IMR-90 (cell line): ENCODE measurements at regions of chr12 and their contacts with region 1.

Region 1: DNA sequence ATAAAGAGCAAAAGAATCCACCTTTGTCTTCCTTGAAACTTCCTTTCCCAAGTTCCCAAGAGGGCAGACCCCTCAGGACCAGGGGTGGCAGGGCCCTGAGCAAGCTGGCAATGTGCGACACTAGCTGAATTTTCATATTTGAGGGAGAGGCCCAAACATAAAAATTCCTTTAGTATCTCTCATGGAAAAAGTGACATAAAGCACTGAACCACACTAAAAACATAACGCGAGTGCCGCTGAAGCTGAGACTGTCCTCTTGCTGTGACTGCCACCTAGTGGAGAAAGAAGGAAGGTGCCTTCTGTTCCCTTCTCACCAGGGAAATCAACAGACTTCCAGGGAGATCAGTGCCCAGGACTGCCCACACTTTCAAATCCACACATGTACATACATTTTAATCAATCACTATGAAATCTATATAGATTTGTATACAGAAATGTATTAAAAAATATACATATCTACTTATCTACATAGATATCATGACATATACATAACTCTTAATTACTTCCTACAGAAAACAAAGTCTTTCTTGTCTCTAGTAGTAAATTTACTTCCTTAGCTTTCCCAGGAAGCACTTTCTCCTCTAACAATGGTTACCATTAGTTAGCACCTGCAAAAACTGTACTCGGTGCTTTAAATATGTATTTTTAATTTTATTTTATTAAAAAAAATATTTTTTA is 53.8 kb downstream of the SSH1 start:
- DNase-seq: peak; percentile 94
- ATAC-seq: peak; percentile 47
- H3K4me3 ChIP-seq: no peak overlapping the region
- H3K27ac ChIP-seq: peak overlapping the region; percentile 97
- H3K4me1 ChIP-seq: peaks cover 45% of the 10 kb centered on the region
- H3K27me3 ChIP-seq: no peaks in the 10 kb centered on the region
- CTCF ChIP-seq: peak; percentile 96
- POLR2A ChIP-seq: peak; percentile 63
- RAD21 ChIP-seq: peak; percentile 93

Region 2: DNA sequence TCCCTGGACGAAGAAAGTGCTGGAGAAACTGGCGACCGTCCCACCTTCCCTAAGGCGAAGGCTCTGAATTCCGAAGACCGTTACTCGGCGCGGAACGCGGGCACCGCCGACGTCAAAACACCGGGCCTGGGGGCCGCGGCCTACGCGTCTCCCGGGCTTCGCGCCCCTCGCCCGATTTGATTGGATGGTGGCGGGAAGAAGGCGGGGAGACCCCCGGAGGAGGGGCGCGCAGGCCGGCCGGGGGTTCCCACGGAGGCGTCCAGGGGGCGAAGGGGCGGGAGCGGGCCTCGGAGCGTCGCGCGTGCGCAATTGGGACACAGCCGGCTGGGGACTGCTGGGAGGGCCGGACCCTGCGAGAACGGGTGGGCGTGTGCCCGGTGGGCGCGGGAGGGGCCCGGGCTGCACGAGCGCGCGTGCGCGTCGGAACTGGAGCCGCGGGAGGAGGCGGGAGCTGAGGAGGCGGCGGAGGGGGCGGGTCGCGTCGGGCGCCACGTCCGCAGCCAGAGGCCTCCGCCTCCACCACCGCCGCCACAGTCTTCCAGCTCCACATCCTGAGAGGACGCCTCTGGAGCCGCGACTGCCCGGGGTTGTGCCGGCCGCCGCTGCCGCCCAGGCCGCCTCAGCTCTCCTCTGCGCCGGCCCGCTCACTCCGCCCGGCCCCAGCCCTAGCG is 1848.1 kb before region 1 on chr12 and contains the start of gene TMEM263:
- CTCF ChIA-PET with region 1: no interaction called
- POLR2A ChIA-PET with region 1: interaction called, 20 read pairs
- dilution Hi-C with region 1: no loop called
- in situ Hi-C with region 1: no loop called
- intact Hi-C with region 1: no loop called
- DNase-seq: peak; percentile 95
- ATAC-seq: peak; percentile 86
- H3K4me3 ChIP-seq: peak within 1 kb of the TSS; percentile 85
- H3K27ac ChIP-seq: peak within 1 kb of the TSS; percentile 90
- H3K4me1 ChIP-seq: peaks cover 4% of the 10 kb centered on the region
- H3K27me3 ChIP-seq: no peaks in the 10 kb centered on the region
- CTCF ChIP-seq: no peak
- POLR2A ChIP-seq: peak; percentile 97
- RAD21 ChIP-seq: no peak
- total RNA-seq, gene TMEM263: 99.7 and 154 TPM in 2 replicates

Region 3: GRCh38 chr12:108442067-108442466 is 361.5 kb before region 1 on chr12:
- CTCF ChIA-PET with region 1: no interaction called
- POLR2A ChIA-PET with region 1: no interaction called
- dilution Hi-C with region 1: no loop called
- in situ Hi-C with region 1: no loop called
- intact Hi-C with region 1: no loop called
- DNase-seq: no peak
- ATAC-seq: no peak
- H3K4me3 ChIP-seq: no peak overlapping the region
- H3K27ac ChIP-seq: no peak overlapping the region
- H3K4me1 ChIP-seq: no peaks in the 10 kb centered on the region
- H3K27me3 ChIP-seq: no peaks in the 10 kb centered on the region
- CTCF ChIP-seq: no peak
- POLR2A ChIP-seq: no peak
- RAD21 ChIP-seq: no peak

Region 4: GRCh38 chr12:108649669-108650068 is 153.9 kb before region 1 on chr12:
- CTCF ChIA-PET with region 1: no interaction called
- POLR2A ChIA-PET with region 1: no interaction called
- dilution Hi-C with region 1: no loop called
- in situ Hi-C with region 1: no loop called
- intact Hi-C with region 1: loop called (anchors 5 kb)
- DNase-seq: peak; percentile 94
- ATAC-seq: peak; percentile 73
- H3K4me3 ChIP-seq: no peak overlapping the region
- H3K27ac ChIP-seq: peak overlapping the region; percentile 28; the same call in 1 of the 2 replicates
- H3K4me1 ChIP-seq: peaks cover 31% of the 10 kb centered on the region
- H3K27me3 ChIP-seq: no peaks in the 10 kb centered on the region
- CTCF ChIP-seq: no peak
- POLR2A ChIP-seq: no peak
- RAD21 ChIP-seq: no peak

Region 5: GRCh38 chr12:108691175-108691997 is 112.2 kb before region 1 on chr12:
- CTCF ChIA-PET with region 1: no interaction called
- POLR2A ChIA-PET with region 1: no interaction called
- dilution Hi-C with region 1: no loop called
- in situ Hi-C with region 1: no loop called
- intact Hi-C with region 1: loop called (anchors 1 kb)
- DNase-seq: peak; percentile 99
- ATAC-seq: peak; percentile 84
- H3K4me3 ChIP-seq: peak overlapping the region; percentile 18
- H3K27ac ChIP-seq: peak overlapping the region; percentile 95
- H3K4me1 ChIP-seq: peaks cover 35% of the 10 kb centered on the region
- H3K27me3 ChIP-seq: no peaks in the 10 kb centered on the region
- CTCF ChIP-seq: peak; percentile 32; the same call in 1 of the 2 replicates
- POLR2A ChIP-seq: peak; percentile 82; the same call in 1 of the 2 replicates
- RAD21 ChIP-seq: peak; percentile 48

Region 6: DNA sequence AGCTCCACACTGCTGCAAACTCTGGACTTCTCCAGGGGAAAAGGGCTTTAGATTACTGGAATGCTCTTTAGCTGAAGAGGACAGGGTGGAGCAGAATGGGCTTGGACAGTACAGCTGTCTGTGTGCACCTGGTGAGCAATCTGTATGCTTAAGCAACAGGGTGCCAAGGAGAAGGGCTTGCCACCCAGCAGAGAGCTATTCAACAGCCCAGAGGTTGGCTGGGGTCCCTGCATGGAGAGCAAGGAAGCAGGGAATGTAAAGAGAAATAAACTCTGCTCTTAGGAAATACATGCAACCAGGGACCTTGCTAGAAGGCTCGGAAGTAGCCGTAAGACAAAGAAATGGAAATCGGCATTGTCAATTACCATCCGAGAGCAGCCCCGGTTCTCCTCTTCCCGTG is 19.3 kb before region 1 on chr12:
- CTCF ChIA-PET with region 1: no interaction called
- POLR2A ChIA-PET with region 1: no interaction called
- dilution Hi-C with region 1: no loop called
- in situ Hi-C with region 1: no loop called
- intact Hi-C with region 1: no loop called
- DNase-seq: no peak
- ATAC-seq: no peak
- H3K4me3 ChIP-seq: no peak overlapping the region
- H3K27ac ChIP-seq: no peak overlapping the region
- H3K4me1 ChIP-seq: peaks cover 10% of the 10 kb centered on the region
- H3K27me3 ChIP-seq: no peaks in the 10 kb centered on the region
- CTCF ChIP-seq: no peak
- POLR2A ChIP-seq: no peak
- RAD21 ChIP-seq: no peak

Region 7: DNA sequence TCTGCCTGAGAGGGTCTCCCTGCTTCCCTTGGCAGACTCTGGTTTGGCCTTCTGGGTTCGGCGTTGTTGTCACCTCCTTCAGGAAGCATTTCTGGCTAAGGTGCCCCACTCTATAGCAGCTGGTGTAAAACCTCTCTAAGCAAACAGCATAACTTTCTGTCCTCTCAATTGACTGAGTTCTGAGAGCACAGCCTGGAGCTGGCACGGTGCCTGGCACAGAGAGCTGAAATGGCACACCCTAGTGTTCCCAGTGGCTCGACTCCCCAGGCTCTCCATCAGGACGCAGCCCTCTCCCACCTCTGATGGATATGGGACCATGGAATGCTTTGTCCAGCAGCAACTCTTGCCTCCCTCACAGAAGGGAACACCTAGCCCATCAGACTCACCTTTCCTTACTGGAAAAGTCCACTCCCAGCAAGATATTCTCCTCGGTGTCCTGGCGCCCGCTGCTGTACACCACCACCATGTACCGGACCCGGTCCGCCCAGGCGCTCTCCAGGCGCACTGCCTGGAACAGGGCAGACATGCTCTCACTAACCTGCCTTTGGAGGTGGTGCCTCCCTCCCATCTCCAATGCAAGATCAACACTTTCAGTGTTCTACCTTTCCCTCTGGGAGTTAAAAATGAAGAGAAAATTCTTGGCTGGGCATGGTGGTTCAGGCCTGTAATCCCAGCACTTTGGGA is 13.2 kb after region 1 on chr12:
- CTCF ChIA-PET with region 1: interaction called, 11 read pairs
- POLR2A ChIA-PET with region 1: interaction called, 13 read pairs
- dilution Hi-C with region 1: no loop called
- in situ Hi-C with region 1: no loop called
- intact Hi-C with region 1: no loop called
- DNase-seq: no peak
- ATAC-seq: no peak
- H3K4me3 ChIP-seq: no peak overlapping the region
- H3K27ac ChIP-seq: peak overlapping the region; percentile 37
- H3K4me1 ChIP-seq: peaks cover 15% of the 10 kb centered on the region
- H3K27me3 ChIP-seq: no peaks in the 10 kb centered on the region
- CTCF ChIP-seq: no peak
- POLR2A ChIP-seq: no peak
- RAD21 ChIP-seq: no peak

Region 8: GRCh38 chr12:108850854-108851573 is 47.4 kb after region 1 on chr12:
- CTCF ChIA-PET with region 1: interaction called, 4 read pairs
- POLR2A ChIA-PET with region 1: interaction called, 5 read pairs
- dilution Hi-C with region 1: no loop called
- in situ Hi-C with region 1: loop called (anchors 5 kb)
- intact Hi-C with region 1: loop called (anchors 1 kb)
- DNase-seq: peak; percentile 91
- ATAC-seq: peak; percentile 71
- H3K4me3 ChIP-seq: no peak overlapping the region
- H3K27ac ChIP-seq: peak overlapping the region; percentile 50
- H3K4me1 ChIP-seq: peaks cover 31% of the 10 kb centered on the region
- H3K27me3 ChIP-seq: no peaks in the 10 kb centered on the region
- CTCF ChIP-seq: peak; percentile 40
- POLR2A ChIP-seq: peak; percentile 52
- RAD21 ChIP-seq: peak; percentile 45

Region 9: DNA sequence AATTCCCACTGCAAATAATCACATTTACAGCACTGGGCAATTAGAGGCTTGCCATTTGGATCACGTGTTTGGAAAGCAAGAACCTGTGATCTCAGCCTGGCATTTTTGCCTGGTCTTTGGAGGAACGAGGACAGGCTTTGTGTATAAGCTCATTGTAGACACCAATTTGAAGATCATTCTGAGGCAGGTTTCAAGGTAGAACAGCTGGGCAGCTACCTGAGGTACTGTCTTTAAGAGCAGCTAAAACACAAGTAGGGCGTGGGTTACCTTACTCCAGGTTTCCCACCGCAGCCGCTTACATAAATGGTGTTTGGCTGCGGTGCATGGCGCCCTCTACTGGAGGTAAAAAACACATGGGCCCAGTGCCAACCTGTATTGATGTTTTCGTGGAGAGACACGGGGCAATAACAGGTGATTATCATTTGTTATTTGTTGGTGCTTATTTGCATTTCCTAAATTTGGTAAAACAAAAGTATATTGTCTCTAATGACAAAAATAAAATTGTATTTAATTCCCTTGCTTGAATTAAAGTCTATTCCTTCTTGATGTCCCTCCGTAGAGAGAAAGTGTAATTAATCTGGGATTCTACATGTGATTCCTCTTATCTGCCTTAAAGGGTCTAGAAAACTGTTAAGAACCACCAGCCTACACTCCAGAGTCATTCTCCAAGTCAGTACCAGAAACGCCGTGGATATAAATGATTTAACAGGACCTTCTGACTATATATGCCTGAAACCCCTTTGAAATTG is 147.6 kb after region 1 on chr12:
- CTCF ChIA-PET with region 1: interaction called, 11 read pairs
- POLR2A ChIA-PET with region 1: no interaction called
- dilution Hi-C with region 1: no loop called
- in situ Hi-C with region 1: no loop called
- intact Hi-C with region 1: loop called (anchors 2 kb)
- DNase-seq: peak; percentile 54
- ATAC-seq: peak; percentile 37
- H3K4me3 ChIP-seq: no peak overlapping the region
- H3K27ac ChIP-seq: no peak overlapping the region
- H3K4me1 ChIP-seq: 0 out of 2 replicates have a peak, but pooled peaks cover 1% of the 10 kb centered on the region
- H3K27me3 ChIP-seq: peaks cover 6% of the 10 kb centered on the region
- CTCF ChIP-seq: peak; percentile 78
- POLR2A ChIP-seq: no peak
- RAD21 ChIP-seq: peak; percentile 85

Region 10: DNA sequence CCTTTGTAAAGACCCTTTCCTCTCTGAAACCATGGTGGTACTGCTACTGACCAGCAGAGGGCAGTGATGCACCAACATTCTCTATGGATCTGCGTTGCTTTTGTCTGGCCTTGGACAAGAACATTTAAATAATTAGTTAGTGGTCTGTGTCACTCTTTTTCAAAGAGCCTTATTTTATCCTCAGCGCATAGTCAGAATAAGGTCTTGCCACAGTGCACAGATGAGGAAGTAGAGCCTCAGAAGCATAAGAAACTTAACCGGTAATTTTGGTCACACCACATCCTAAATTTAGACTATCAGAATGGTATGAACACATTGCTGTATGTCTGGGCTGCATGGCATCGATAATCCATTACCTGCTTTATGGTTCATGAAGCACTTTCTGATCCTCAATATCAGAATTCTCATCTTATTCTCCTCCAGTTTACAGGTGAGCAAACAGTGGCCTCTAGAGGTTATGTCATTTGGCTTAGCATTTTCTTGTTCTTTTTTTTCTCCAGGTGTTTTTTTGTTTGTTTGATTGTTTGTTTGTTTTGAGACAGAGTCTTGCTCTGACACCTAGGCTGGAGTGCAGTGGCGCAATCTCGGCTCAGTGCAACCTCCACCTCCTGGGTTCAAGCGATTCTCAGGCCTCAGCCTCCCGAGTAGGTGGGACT is 1296.9 kb after region 1 on chr12:
- CTCF ChIA-PET with region 1: no interaction called
- POLR2A ChIA-PET with region 1: no interaction called
- dilution Hi-C with region 1: no loop called
- in situ Hi-C with region 1: no loop called
- intact Hi-C with region 1: no loop called
- DNase-seq: peak; percentile 78
- ATAC-seq: peak; percentile 92
- H3K4me3 ChIP-seq: no peak overlapping the region
- H3K27ac ChIP-seq: no peak overlapping the region
- H3K4me1 ChIP-seq: peaks cover 7% of the 10 kb centered on the region
- H3K27me3 ChIP-seq: no peaks in the 10 kb centered on the region
- CTCF ChIP-seq: peak; percentile 95
- POLR2A ChIP-seq: no peak
- RAD21 ChIP-seq: peak; percentile 98